ENCODE measurements at regions of chr18 and their contacts with region 1.

Region 1: GRCh38 chr18:21600526-21601410 is at the start of gene ESCO1:
- DNase-seq: peak; percentile 95
- H3K4me3 ChIP-seq: peak within 1 kb of the TSS; percentile 99
- H3K27ac ChIP-seq: peak within 1 kb of the TSS; percentile 97
- H3K27me3 ChIP-seq: no peaks in the 10 kb centered on the region
- CTCF ChIP-seq: peak; percentile 72
- polyA plus RNA-seq, gene ESCO1: 5.6 and 8.9 TPM in 2 replicates

Region 2: DNA sequence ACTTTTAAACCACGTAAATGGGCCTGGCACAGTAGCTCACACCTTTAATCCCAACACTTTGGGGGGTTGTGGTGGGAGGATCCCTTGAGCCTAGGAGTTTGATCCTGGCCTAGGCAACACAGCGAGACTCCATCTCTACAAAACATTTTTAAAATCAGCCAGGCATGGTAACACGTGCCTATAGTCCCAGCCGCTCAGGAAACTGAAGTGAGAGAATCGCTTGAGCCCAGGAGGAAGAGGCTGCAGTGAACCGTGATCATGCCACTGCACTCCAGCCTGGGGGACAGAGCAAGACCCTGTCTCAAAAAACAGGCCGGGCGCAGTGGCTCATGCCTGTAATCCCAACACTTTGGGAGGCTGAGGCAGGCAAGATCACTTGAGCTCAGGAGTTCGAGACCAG is 501.3 kb before region 1 on chr18:
- CTCF ChIA-PET with region 1: interaction called, 12 read pairs
- POLR2A ChIA-PET with region 1: no interaction called
- DNase-seq: no peak
- H3K4me3 ChIP-seq: no peak overlapping the region
- H3K27ac ChIP-seq: no peak overlapping the region
- H3K27me3 ChIP-seq: no peaks in the 10 kb centered on the region
- CTCF ChIP-seq: no peak

Region 3: DNA sequence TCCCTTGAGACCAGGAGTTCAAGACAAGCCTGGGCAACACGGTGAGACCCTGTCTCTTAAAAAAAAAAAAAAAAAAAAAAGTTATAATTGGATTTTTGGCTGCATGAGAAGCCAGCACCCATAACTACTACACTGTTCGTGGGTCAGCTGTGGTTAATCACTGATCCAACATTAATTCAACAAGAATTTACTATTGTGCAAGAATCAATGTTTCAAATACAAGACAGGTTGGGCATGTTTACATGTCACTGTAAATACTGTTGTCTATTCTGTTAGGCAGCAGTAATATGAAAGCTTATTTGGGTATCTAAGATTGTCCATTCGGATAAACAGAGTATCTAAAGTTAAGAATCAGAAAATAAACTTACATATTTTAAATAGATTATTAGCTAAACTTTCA is 62.5 kb before region 1 on chr18:
- CTCF ChIA-PET with region 1: interaction called, 12 read pairs
- POLR2A ChIA-PET with region 1: no interaction called
- DNase-seq: no peak
- H3K4me3 ChIP-seq: no peak overlapping the region
- H3K27ac ChIP-seq: no peak overlapping the region
- H3K27me3 ChIP-seq: no peaks in the 10 kb centered on the region
- CTCF ChIP-seq: no peak

Region 4: GRCh38 chr18:21584391-21584790 is 16.4 kb before region 1 on chr18:
- CTCF ChIA-PET with region 1: interaction called, 25 read pairs
- POLR2A ChIA-PET with region 1: no interaction called
- DNase-seq: no peak
- H3K4me3 ChIP-seq: no peak overlapping the region
- H3K27ac ChIP-seq: no peak overlapping the region
- H3K27me3 ChIP-seq: no peaks in the 10 kb centered on the region
- CTCF ChIP-seq: no peak

Region 5: DNA sequence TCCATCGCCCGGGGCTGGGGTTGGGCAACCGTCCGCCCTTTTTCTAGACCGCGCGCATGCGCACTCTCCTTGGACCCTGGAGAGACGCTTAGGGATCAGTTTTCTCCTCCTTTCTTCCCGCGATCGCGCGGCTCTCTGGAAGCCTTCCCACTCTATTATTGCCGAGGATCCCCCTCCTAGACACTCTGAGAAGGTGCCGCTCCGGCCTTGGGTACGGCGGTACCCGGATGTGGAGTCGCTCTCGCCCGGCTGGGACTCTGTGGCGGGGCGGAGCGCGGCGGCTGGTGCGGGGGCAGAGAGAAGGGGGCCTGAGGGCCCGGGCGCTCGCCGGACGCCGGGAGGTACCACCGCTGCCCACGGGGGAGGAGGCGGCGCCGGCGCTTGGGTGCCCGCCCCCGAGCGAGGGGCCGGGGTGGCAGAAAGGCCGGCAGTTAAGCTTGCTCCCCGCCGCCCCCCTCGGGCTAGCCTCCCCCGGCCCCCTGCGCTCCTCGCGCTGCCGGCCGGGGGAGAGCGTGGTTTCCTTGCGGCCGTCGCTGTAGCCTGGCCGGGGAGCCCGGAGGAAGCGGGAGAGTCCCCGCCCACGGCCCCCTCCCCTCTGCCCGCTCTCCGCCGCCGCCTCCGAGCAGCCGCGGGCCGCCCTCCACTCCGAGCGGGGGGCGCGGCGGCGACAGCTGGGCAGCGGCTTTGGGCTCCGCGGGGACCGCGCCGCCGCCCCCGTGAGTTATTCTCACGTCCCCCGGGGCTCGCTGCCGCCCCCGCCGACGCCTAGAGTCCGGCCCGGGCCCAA is 140.1 kb after region 1 on chr18 and contains the start of gene MIB1:
- CTCF ChIA-PET with region 1: interaction called, 6 read pairs
- POLR2A ChIA-PET with region 1: interaction called, 15 read pairs
- DNase-seq: peak; percentile 90
- H3K4me3 ChIP-seq: peak within 1 kb of the TSS; percentile 90
- H3K27ac ChIP-seq: peak within 1 kb of the TSS; percentile 97
- H3K27me3 ChIP-seq: no peaks in the 10 kb centered on the region
- CTCF ChIP-seq: no peak
- polyA plus RNA-seq, gene MIB1: 20.9 and 25.3 TPM in 2 replicates